Activated CD4-positive, alpha-beta T cell treated with anti-CD3 and anti-CD28 coated beads, Interleukin-2, amount 10 ng/mL, durations not matched to agents 24 days and 14 days (primary cell): ENCODE measurements at regions of chr9 and their contacts with region 1.

Region 1: GRCh38 chr9:137672907-137673791 is 54.3 kb downstream of the EHMT1 start:
- DNase-seq: peak; percentile 83
- H3K4me3 Mint-ChIP-seq: no peak overlapping the region
- H3K27ac Mint-ChIP-seq: no peak overlapping the region
- H3K4me1 Mint-ChIP-seq: peaks cover 16% of the 10 kb centered on the region
- H3K27me3 Mint-ChIP-seq: no peaks in the 10 kb centered on the region

Region 2: GRCh38 chr9:137478962-137479861 is 193.9 kb before region 1 on chr9:
- intact Hi-C with region 1: no loop called
- DNase-seq: no peak
- H3K4me3 Mint-ChIP-seq: no peak overlapping the region
- H3K27ac Mint-ChIP-seq: no peak overlapping the region
- H3K4me1 Mint-ChIP-seq: peaks cover 7% of the 10 kb centered on the region
- H3K27me3 Mint-ChIP-seq: no peaks in the 10 kb centered on the region

Region 3: DNA sequence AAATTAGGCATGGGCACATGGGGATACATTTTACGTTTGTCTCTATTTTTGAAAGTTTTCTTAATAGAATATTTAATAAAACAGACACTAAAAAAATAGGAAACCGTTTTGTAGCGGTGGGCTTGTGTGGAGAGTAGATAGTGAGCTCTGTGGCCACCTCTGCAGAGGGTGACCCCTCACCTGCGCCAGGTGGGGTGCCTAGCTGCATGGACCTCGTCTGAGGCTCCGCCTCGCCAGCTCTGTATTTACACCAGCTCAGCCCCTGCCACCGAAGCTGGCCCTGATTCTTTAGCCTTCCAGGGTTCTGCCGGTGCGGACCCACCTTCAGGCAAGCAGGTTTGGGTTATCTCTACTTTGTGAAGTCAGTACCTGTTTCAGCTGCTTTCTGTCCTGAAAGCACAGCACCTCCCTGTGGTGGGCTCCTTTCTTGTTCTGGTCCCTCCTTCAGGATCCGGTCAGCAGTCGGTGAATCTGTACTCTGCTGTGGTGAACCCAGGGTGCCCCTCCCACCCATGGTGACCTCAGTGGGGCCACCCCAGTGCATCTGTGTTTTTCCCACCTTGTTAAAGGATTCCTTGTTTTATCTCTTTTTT is 99.2 kb after region 1 on chr9:
- intact Hi-C with region 1: loop called (anchors 5 kb)
- DNase-seq: no peak
- H3K4me3 Mint-ChIP-seq: no peak overlapping the region
- H3K27ac Mint-ChIP-seq: no peak overlapping the region
- H3K4me1 Mint-ChIP-seq: no peaks in the 10 kb centered on the region
- H3K27me3 Mint-ChIP-seq: no peaks in the 10 kb centered on the region

Region 4: GRCh38 chr9:137804908-137805630 is 131.9 kb after region 1 on chr9:
- intact Hi-C with region 1: no loop called
- DNase-seq: no peak
- H3K4me3 Mint-ChIP-seq: no peak overlapping the region
- H3K27ac Mint-ChIP-seq: no peak overlapping the region
- H3K4me1 Mint-ChIP-seq: peaks cover 3% of the 10 kb centered on the region
- H3K27me3 Mint-ChIP-seq: no peaks in the 10 kb centered on the region